ENCODE measurements at regions of chr19 and their contacts with region 1.

Region 1: GRCh38 chr19:4256563-4256962 is 9.7 kb downstream of the YJU2 start:
- DNase-seq: peak; percentile 33
- H3K4me3 ChIP-seq: no peak overlapping the region
- H3K27ac ChIP-seq: no peak overlapping the region
- H3K4me1 ChIP-seq: no peaks in the 10 kb centered on the region
- H3K27me3 ChIP-seq: no peaks in the 10 kb centered on the region
- CTCF ChIP-seq: 0 out of 2 replicates have a peak, but pooled peaks have one; percentile 23

Region 2: DNA sequence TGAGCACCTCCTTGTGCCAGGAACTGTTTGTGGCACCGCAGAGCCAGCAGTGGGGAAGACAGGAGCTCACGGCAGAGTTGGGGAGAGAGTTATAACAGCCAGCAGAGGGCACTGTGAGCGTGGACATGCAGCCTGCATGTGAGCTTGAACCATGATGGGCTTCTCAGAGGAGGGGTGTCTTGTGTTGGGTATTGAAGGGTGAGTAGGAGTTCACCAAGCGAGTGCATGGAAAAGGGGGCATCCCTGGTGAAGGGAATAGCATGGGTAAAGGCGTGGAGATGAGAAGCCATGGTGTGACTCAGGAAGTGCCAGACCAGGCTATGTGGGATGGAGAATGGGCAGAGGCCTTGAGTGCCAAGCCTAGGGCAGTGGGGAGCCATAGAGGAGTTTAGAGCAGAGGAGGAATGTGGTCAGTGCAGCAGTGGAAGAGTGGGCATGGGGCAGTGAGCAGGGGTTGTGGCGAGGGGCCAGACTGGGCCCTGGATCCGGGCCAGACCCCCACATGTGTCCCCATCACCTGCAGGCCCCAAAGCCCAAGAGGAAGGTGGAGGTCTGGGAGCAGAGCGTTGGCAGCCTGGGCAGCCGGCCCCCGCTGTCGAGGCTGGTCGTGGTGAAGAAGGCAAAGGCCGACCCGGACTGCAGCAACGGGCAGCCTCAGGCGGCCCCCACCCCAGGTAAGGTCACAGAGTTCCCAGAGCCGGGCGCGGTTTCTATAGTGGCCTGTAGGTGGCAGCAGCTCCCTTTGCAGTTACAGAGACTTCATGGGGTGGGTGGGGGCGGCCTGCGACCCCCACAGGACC is 10.7 kb after region 1 on chr19:
- CTCF ChIA-PET with region 1: no interaction called
- POLR2A ChIA-PET with region 1: no interaction called
- intact Hi-C with region 1: no loop called
- DNase-seq: peak; percentile 76
- H3K4me3 ChIP-seq: no peak overlapping the region
- H3K27ac ChIP-seq: no peak overlapping the region
- H3K4me1 ChIP-seq: no peaks in the 10 kb centered on the region
- H3K27me3 ChIP-seq: no peaks in the 10 kb centered on the region
- CTCF ChIP-seq: peak; percentile 80

Region 3: DNA sequence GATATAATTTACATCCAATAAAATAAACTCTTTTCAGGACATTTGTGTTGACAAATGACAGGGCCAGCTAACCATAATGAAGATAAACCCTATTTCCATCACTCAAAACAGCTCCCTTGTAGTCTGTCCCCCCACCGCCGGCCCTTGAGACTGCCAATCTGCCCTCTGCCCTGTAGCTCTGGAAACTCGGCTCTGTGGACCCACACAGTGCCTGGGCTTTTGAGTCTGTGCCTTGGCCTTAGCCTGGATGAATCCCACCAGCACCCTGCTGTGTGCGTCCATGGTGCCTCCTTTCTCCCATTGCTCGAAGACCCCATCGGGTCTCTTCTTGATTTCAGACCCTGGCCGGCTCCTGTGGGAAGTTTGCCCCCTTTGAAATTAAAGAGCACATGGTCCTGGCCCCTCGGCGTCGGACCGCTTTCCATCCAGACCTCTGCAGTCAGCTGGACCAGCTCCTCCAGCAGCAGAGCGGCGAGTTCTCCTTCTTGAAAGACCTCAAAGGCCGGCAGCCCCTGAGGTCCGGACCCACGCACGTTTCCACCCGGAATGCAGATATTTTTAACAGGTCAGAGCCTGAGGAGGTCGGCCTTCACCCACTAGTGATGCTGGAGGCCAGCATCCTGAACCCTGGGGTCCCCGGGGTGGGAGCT is 171.9 kb after region 1 on chr19:
- CTCF ChIA-PET with region 1: interaction called, 18 read pairs
- POLR2A ChIA-PET with region 1: no interaction called
- intact Hi-C with region 1: no loop called
- DNase-seq: no peak
- H3K4me3 ChIP-seq: no peak overlapping the region
- H3K27ac ChIP-seq: no peak overlapping the region
- H3K4me1 ChIP-seq: no peaks in the 10 kb centered on the region
- H3K27me3 ChIP-seq: no peaks in the 10 kb centered on the region
- CTCF ChIP-seq: no peak

Measured in A673 (cell line).